GM10248 (cell line): ENCODE measurements at regions of chr11 and their contacts with region 1.

Region 1: DNA sequence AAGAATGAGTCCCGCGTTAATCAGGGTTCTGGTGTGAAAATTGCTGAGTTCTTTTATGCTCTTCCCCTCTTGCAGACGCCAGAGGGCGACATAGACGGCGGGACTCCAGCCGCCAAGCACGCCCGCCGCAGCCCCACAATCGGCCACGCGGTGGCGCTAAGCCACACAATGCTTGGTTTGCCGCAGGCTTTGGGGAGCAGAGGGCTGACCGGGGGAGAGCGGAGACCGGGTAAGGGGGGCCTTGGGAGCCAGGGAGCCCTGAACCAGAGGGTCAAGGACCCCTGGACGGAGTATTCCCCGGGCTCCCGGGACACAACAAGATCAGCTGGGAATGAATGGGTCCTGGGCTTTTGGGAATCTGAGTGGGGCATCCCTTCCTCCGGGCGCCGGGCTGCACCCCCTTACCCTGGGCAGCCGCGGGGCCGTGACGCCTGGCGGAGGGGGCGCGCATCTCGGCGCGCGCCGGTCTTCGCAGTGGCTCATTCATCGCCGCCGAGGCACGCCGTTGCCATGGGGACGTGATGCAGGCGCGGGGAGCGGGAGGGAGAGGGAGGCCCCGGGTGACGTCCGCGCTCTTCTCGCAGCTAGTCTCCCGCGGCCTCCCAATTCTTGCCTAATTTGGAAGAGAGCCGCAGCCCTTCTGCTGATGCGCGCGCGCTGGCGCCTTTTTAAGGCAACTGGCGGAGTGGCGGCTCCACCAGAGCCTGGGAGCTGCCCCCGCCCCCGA is 12.2 kb upstream of the NPAS4 start:
- DNase-seq: peak; percentile 95
- CTCF ChIP-seq: peak; percentile 100

Region 2: DNA sequence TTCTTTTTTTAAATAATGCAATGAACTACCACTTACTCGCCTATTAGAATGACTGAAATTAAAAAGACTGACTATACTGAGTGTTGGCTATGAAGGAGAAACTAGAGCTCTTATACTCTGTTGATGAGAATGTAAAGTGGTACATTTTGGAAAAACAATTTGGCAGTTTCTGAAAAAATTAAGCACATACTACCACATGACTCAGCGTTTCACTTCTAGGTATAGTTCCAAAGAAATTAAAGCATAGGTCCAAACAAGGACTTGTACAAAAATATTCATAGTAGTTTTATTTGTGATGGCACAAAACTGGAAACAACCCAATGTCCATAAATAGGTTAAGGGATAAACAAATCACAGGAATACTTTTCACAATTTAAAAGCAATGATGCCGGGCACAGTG is 14.7 kb before region 1 on chr11:
- CTCF ChIA-PET with region 1: interaction called, 40 read pairs
- POLR2A ChIA-PET with region 1: no interaction called
- DNase-seq: no peak
- CTCF ChIP-seq: no peak

Region 3: DNA sequence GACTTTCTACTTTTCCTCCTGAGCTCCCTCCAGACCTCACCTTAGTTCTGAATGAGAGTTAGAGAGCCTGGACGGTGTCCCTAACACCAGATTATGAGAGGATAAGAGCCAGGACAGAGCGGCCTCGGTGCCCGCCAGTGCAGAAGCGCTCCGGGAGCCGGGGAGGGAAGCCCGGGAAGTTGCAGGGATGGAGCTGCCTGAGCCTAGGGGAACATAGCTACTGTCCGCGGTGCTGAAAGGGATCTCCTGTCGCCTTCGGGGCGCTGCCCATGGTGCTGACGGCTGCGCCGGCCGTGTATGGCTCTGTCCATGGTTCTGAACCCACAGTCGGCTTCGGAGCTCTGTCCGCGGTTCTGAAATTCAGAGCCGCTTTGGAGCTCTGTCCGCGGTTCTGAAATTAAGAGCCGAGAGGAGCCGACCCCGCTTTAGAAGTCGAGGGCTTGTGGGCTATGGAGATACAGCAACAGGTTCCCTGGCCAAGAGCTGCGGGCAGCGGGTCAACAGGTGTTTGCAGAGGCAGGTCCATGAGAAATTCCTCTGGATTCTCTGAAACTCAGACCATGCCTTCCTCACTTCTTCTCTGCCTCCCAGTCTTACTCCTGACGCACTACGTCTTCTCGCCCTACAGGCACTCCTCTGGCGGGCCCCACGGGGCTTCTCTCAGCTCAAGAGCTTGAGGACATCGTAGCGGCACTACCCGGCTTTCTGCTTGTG is 13.0 kb after region 1 on chr11:
- CTCF ChIA-PET with region 1: interaction called, 19 read pairs
- POLR2A ChIA-PET with region 1: no interaction called
- DNase-seq: peak; percentile 93
- CTCF ChIP-seq: no peak

Region 4: DNA sequence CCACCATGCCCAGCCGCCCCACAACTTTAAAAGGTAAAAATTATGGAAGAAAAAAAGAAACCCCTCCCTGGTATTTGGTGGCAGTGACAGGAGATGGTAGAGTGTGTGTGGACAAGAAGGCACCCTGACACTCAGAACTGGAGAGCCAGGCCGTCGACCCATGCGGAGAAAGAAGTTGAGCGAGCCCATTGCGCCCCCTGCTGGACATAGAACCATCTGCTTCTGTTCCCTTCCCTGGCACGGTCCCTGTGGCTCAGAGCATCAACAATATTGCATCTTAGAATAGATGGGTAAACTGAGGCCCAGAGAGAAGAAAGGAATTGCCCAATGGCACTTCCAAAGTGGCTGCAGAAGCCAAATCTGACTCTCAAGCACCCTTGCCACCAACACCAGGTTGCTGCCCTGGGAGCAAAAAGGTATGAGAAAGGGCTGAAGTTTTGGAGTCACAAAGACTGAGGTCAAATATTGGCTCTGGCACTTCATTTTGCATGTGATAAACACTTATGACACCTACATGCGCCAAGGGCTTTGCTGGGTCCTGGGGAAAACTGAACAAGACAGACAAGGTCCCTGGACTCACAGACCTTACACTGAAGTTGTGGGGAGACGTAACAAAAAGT is 21.4 kb after region 1 on chr11:
- CTCF ChIA-PET with region 1: interaction called, 21 read pairs
- POLR2A ChIA-PET with region 1: interaction called, 5 read pairs
- DNase-seq: peak; percentile 78
- CTCF ChIP-seq: peak; percentile 83

Region 5: GRCh38 chr11:66438504-66439466 is 30.1 kb after region 1 on chr11 and contains the start of gene MRPL11:
- CTCF ChIA-PET with region 1: interaction called, 28 read pairs
- POLR2A ChIA-PET with region 1: no interaction called
- DNase-seq: peak; percentile 96
- CTCF ChIP-seq: peak; percentile 74

Region 6: GRCh38 chr11:66480117-66480938 is 71.7 kb after region 1 on chr11 and contains the start of gene DPP3:
- CTCF ChIA-PET with region 1: interaction called, 18 read pairs
- POLR2A ChIA-PET with region 1: no interaction called
- DNase-seq: peak; percentile 100
- CTCF ChIP-seq: no peak

Region 7: GRCh38 chr11:66834501-66834845 is 425.8 kb after region 1 on chr11:
- CTCF ChIA-PET with region 1: interaction called, 19 read pairs
- POLR2A ChIA-PET with region 1: no interaction called
- DNase-seq: no peak
- CTCF ChIP-seq: no peak